Sigmoid colon (tissue), 7 donors: ENCODE measurements at regions of chr5 and their contacts with region 1.

Region 1: DNA sequence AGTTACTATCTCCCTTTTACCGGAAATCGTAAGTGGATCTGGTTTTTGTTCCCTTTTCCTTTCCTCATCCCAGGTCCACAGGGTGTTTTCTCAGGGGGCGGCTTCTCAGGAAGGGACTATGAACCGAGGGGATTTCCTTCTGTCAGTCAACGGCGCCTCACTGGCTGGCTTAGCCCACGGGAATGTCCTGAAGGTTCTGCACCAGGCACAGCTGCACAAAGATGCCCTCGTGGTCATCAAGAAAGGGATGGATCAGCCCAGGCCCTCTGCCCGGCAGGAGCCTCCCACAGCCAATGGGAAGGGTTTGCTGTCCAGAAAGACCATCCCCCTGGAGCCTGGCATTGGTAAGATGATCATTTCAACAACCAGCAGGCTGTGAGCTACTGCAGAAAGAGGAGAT is 75.8 kb downstream of the GOLPH3 start:
- DNase-seq: no peak
- H3K4me3 ChIP-seq: no peak overlapping the region
- H3K27ac ChIP-seq: peak overlapping the region in 3 of 4 donors; percentile 56 to 75 (median 63)
- H3K4me1 ChIP-seq: peaks cover 0 to 41% (median 39%) of the 10 kb centered on the region in 4 donors
- H3K27me3 ChIP-seq: no peaks in the 10 kb centered on the region
- CTCF ChIP-seq: no peak
- EP300 ChIP-seq: no peak
- POLR2A ChIP-seq: no peak

Region 2: DNA sequence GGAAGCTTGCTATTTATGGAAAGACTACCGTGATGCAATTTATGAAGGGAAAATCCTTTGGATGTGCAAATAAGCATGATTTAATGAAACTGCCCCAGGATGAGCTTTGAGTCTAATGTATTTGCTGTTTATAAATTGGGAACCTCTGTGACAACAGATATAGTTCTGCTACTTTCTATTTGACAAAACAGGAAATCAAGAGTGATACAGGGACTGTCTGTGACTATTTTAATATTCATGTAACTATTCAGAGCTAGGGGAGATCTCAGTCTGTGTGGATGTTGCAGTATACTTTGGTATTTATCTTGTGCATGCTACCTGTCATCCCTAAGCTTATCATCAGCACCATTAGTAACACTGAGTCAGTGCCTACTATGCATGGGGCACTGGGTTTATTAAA is 327.3 kb before region 1 on chr5:
- intact Hi-C with region 1: no loop called
- DNase-seq: no peak
- H3K4me3 ChIP-seq: no peak overlapping the region
- H3K27ac ChIP-seq: no peak overlapping the region
- H3K4me1 ChIP-seq: no peaks in the 10 kb centered on the region
- H3K27me3 ChIP-seq: no peaks in the 10 kb centered on the region
- CTCF ChIP-seq: no peak
- EP300 ChIP-seq: no peak
- POLR2A ChIP-seq: no peak

Region 3: DNA sequence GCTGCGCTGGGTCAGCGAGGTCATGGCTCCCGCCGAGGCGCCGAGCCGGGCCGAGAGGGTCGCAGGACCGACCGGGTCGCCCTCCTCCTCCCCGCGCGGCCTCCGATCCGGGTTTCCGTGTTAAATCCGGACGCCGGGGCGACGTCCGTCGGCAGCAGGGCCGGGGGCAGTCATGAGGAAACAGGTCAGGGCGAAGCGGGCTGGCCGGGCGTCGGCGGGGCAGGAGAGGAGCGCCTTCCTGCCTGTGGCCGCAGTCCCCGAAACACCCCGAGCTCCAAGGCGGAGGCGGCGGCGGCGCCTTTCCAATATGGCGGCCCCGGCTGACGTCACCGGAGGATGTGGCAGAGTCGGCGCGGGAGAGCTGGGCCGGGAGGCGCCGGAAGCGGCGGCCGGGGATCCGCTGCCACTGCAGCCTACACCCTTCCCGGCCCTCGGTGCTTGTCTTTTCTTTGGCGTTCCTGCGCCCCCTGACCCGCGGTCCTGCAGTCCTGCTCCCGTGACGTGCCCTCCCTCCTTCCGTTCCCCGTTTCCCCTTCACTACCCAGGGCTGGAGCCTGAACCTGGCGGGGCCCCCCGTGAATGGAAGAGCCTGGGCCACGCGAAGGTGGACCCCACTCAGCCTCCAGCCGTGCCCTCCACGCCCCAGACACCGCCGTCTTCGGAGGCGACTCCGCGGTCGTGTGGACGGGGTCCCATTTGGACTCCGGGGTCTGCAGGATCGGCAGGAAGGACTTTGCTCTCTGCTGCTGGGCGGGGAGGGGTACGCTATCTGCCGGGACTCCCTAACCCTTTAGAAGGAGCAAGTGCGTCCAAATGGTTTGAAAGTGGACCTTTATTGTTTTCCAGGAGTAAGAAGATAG is 76.0 kb after region 1 on chr5 and contains the start of gene GOLPH3:
- intact Hi-C with region 1: loop called (anchors 5 kb)
- DNase-seq: peak; percentile 96
- H3K4me3 ChIP-seq: peak within 1 kb of the TSS; percentile 76 to 98 (median 92)
- H3K27ac ChIP-seq: peak within 1 kb of the TSS; percentile 99 to 100 (median 100)
- H3K4me1 ChIP-seq: peaks cover 0 to 47% (median 36%) of the 10 kb centered on the region in 4 donors
- H3K27me3 ChIP-seq: no peaks in the 10 kb centered on the region
- CTCF ChIP-seq: no peak
- EP300 ChIP-seq: peak in 2 of 4 donors; percentile 12 to 18
- POLR2A ChIP-seq: peak; percentile 94 to 95
- total RNA-seq, gene GOLPH3: 170 to 247 (median 192) TPM

Region 4: GRCh38 chr5:32232441-32233219 is 134.3 kb after region 1 on chr5:
- intact Hi-C with region 1: loop called (anchors 5 kb)
- DNase-seq: peak; percentile 86
- H3K4me3 ChIP-seq: no peak overlapping the region
- H3K27ac ChIP-seq: peak overlapping the region; percentile 70 to 76 (median 74)
- H3K4me1 ChIP-seq: peaks cover 0 to 42% (median 32%) of the 10 kb centered on the region in 4 donors
- H3K27me3 ChIP-seq: no peaks in the 10 kb centered on the region
- CTCF ChIP-seq: peak; percentile 70 to 90 (median 76)
- EP300 ChIP-seq: no peak
- POLR2A ChIP-seq: no peak